HepG2 (cell line): ENCODE measurements at regions of chr7 and their contacts with region 1.

Region 1: DNA sequence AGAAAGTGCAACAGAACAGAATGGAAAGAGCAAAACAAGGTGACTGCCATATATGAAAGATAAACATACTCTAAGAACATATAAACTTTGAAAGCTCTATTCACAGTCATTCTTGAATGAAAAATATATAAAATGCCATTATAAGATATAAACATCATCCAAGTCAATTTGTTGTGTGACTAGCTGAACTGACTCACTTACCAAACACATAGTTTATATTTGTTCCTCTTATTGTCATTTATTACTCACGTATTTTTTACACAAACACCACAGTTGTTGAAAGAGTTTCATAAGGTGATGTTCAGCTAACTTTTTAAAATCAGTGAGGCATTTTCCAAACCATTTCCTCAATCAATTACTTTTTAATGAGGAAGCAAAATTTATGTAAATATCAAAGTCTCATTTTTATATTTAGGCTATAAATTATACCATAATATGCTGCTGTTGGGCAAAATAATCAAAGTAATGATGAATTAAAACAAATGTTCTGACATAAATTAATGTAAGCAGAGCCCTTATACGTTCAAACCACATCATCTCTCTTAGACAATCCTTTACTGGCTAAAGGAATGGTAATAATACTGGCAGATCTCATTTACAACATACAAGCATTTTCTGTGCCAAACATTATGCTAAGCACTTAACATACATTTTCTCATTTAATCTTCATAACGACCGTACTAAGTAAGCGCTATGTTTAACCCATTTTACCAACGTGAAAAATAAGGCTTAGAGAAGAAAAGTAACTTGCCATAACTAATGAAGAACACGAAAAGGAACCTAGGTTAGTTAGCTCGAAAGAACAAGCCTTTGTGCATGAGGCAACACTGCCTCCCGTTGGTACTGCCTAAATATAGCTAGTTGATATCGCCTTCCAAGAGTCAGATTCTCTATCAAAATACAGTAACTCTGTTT is 7.3 kb downstream of the LRRN3 start:
- DNase-seq: peak; percentile 20
- ATAC-seq: peak; percentile 68
- H3K4me3 ChIP-seq: no peak overlapping the region
- H3K27ac ChIP-seq: no peak overlapping the region
- H3K4me1 ChIP-seq: no peaks in the 10 kb centered on the region
- H3K27me3 ChIP-seq: no peaks in the 10 kb centered on the region
- CTCF ChIP-seq: peak; percentile 77
- EP300 ChIP-seq: no peak
- POLR2A ChIP-seq: no peak
- RAD21 ChIP-seq: peak; percentile 33; the same call in 1 of the 2 replicates

Region 2: GRCh38 chr7:110590415-110590814 is 507.9 kb before region 1 on chr7:
- CTCF ChIA-PET with region 1: no interaction called
- POLR2A ChIA-PET with region 1: no interaction called
- in situ Hi-C with region 1: no loop called
- intact Hi-C with region 1: loop called (anchors 5 kb)
- DNase-seq: no peak
- ATAC-seq: no peak
- H3K4me3 ChIP-seq: no peak overlapping the region
- H3K27ac ChIP-seq: no peak overlapping the region
- H3K4me1 ChIP-seq: no peaks in the 10 kb centered on the region
- H3K27me3 ChIP-seq: no peaks in the 10 kb centered on the region; a peak in 1 of 5 replicates
- CTCF ChIP-seq: no peak
- EP300 ChIP-seq: no peak
- POLR2A ChIP-seq: no peak
- RAD21 ChIP-seq: no peak

Region 3: GRCh38 chr7:111043533-111043932 is 54.7 kb before region 1 on chr7:
- CTCF ChIA-PET with region 1: no interaction called
- POLR2A ChIA-PET with region 1: no interaction called
- in situ Hi-C with region 1: no loop called
- intact Hi-C with region 1: no loop called
- DNase-seq: no peak
- ATAC-seq: no peak
- H3K4me3 ChIP-seq: no peak overlapping the region
- H3K27ac ChIP-seq: no peak overlapping the region
- H3K4me1 ChIP-seq: peaks cover 21% of the 10 kb centered on the region
- H3K27me3 ChIP-seq: no peaks in the 10 kb centered on the region
- CTCF ChIP-seq: no peak
- EP300 ChIP-seq: no peak
- POLR2A ChIP-seq: no peak
- RAD21 ChIP-seq: no peak

Region 4: DNA sequence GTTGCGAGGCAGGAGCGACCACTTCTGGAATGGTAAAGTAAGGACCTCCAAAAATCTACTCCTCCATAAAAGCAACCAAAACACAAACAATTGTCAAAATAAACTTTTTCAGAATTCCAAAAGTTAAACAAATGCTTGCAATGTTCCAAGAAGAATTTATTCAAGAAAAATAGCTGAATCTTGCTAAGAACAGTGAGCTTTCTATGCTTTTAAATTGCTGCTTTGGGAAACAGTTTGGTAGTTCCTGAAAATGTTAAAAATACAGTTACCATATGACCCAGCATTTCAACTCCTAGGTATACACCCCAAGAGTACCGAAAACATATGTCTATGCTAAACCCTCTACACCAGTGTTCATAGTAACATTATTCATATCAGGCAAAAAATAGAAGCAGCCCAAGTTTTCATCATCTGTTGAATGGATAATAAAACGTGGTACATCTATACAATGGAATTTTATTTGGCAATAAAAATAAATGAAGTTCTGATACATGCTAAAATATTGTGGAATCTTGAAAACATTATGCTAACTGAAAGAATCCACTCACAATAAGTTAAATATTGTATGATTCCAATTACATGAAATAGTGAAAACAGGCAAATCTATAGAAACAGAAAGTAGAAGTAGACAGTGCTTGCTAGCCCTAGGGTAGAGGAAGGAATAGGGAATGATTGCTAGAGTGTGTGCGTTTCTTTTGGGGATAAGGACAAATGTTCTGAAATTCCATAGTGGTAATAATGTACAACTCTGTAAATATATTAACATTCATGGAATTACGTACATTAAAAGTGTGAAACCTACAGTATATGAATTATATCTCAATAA is 49.7 kb after region 1 on chr7:
- CTCF ChIA-PET with region 1: no interaction called
- POLR2A ChIA-PET with region 1: no interaction called
- in situ Hi-C with region 1: no loop called
- intact Hi-C with region 1: no loop called
- DNase-seq: no peak
- ATAC-seq: no peak
- H3K4me3 ChIP-seq: no peak overlapping the region
- H3K27ac ChIP-seq: no peak overlapping the region
- H3K4me1 ChIP-seq: no peaks in the 10 kb centered on the region
- H3K27me3 ChIP-seq: no peaks in the 10 kb centered on the region
- CTCF ChIP-seq: no peak
- EP300 ChIP-seq: no peak
- POLR2A ChIP-seq: no peak
- RAD21 ChIP-seq: no peak